Body of pancreas (tissue), 4 donors: ENCODE measurements at regions of chr12 and their contacts with region 1.

Region 1: DNA sequence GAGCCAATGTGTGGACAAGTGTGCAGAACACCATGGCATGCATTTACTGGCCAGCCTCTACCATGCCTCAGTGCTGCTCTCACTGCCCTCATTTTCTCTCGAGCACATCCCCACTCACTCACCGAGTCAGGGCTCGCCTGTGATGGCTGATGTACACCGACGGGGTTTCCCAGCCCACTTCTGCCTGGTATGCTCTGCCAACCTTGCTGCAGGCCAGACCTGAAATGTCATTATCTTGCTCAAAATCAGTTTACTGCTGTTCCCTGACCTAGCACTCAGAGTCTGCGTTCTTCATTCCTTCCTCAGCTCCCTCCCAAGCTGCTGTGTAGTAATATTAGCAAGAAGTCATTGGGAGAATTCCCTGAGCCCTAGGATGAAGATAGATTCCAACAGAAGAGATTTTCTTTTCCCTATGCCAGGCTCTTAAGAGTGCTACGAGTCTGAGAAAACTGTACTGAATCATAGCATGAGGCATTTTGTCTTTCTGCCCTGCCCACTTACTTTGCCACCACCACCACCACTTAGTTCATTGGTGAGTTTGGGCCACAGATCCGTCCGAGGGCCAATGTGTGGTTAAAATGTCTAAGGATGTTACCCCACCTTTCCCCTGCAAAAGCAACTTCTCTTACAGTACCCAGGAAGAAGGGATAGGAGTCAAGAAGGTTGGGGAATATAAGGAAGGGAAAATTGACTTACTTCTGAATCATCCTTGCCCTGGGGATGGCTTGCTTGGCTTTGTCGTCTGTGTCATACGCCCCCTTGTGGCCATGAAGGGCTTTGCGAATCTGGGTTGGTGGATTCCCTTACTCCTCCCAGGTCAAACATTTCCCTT is 51.0 kb downstream of the BMAL2 start:
- DNase-seq: peak; percentile 77 to 86 (median 78)
- ATAC-seq: peak; percentile 81
- H3K4me3 ChIP-seq: no peak overlapping the region
- H3K27ac ChIP-seq: no peak overlapping the region
- H3K4me1 ChIP-seq: no peaks in the 10 kb centered on the region
- H3K27me3 ChIP-seq: no peaks in the 10 kb centered on the region
- CTCF ChIP-seq: peak; percentile 75 to 93 (median 78)
- POLR2A ChIP-seq: no peak

Region 2: DNA sequence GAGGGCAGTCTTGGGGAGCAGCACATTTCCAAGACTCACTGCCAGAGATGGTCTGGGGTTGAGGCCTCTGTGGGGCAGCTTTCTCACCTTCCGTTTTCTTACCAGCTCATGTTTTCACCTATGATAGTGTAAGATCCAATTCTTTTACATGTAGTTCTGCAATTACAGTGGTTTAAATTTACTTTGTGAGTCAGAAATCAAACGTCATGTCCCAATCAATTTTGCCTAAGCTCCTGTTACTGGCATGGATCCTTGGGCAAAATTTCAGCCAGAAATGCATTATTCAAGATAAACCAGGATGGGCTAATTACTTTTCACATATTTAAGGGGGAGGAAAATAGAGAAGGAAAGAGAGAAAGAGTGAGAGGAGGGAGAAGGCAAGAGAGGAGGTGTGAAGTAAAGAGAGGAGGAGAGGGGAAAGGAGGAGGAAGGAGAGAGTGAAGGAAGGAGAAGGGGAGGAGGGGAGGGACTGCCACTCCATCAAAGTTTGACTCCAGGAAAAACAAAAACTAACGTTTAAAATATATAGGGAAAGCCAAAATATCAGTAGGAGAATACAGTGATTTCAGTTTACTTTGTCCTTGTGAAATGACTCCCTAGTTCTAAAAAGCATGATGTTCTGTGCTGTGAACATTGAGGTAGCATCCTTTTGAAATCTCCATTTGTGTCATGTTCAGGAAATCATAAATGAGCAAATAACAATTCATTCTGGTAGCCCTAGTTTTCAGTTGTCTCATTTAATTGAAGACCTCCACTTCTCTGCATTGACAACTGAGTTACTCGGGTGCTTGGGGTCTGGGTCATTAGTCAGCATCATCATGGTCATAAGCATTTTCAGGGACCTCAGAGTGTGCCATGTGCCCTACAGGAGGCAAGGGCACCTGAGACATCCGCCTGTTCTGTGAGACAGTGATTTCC is 48.0 kb before region 1 on chr12:
- intact Hi-C with region 1: loop called (anchors 5 kb)
- DNase-seq: peak in 1 of 4 donors; percentile 19
- ATAC-seq: no peak
- H3K4me3 ChIP-seq: no peak overlapping the region
- H3K27ac ChIP-seq: peak overlapping the region; percentile 5 to 60 (median 42)
- H3K4me1 ChIP-seq: peaks cover 46% of the 10 kb centered on the region
- H3K27me3 ChIP-seq: peaks cover 0 to 3% of the 10 kb centered on the region in 2 donors
- CTCF ChIP-seq: peak in 1 of 7 experiments; percentile 0
- POLR2A ChIP-seq: no peak